CD4-positive, alpha-beta T cell (primary cell): ENCODE measurements at regions of chr7 and their contacts with region 1.

Region 1: DNA sequence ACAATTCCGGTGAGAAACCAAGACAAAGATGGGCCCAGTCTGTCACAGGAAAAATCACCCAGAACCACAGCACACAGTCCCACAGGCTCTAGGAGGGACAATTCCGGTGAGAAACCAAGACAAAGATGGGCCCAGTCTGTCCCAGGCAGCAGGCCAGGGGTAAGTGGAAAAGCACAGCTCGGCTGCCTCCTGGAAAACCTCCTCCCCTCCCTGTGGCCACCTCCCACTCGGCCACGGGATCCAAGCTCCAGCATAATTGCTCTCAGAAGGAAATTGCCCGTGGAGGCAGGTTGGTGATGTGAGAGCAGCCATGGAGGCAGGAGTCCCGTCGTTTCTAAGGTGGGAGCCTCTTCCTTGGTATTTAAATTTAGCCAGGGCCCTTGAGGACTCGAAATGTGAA is 95.7 kb downstream of the PLXNA4 start:
- DNase-seq: no peak
- ATAC-seq: no peak
- H3K4me3 ChIP-seq: no peak overlapping the region
- H3K4me3 Mint-ChIP-seq: no peak overlapping the region
- H3K27ac ChIP-seq: no peak overlapping the region
- H3K27ac Mint-ChIP-seq: no peak overlapping the region
- H3K4me1 ChIP-seq: peaks cover 8% of the 10 kb centered on the region
- H3K4me1 Mint-ChIP-seq: peaks cover 19% of the 10 kb centered on the region
- H3K27me3 ChIP-seq: peaks cover 0 to 3% of the 10 kb centered on the region in 2 experiments
- H3K27me3 Mint-ChIP-seq: peaks cover 4% of the 10 kb centered on the region
- CTCF ChIP-seq: no peak

Region 2: DNA sequence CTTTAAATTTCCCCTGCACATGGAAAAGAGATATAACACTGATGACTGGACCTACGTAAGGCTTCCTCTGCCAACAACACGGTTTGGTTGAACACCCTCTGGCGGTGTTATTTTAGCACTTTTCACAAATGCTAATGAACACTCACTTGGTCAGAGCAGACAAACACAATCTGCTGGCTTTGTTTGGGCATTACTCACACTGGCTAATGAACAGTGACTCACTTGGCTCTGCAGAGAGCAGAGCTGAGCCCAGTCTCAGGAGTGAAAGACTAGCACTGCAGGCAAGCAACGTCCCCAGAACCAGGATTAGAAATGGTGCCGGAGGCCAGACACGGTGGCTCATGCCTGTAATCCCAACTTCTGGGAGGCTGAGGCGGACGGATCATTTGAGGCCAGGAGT is 335.1 kb before region 1 on chr7:
- CTCF ChIA-PET with region 1: no interaction called
- POLR2A ChIA-PET with region 1: no interaction called
- intact Hi-C with region 1: no loop called
- DNase-seq: no peak
- ATAC-seq: no peak
- H3K4me3 ChIP-seq: no peak overlapping the region
- H3K4me3 Mint-ChIP-seq: no peak overlapping the region
- H3K27ac ChIP-seq: no peak overlapping the region
- H3K27ac Mint-ChIP-seq: no peak overlapping the region
- H3K4me1 ChIP-seq: no peaks in the 10 kb centered on the region
- H3K4me1 Mint-ChIP-seq: no peaks in the 10 kb centered on the region
- H3K27me3 ChIP-seq: no peaks in the 10 kb centered on the region
- H3K27me3 Mint-ChIP-seq: no peaks in the 10 kb centered on the region
- CTCF ChIP-seq: no peak

Region 3: GRCh38 chr7:132424821-132425724 is 55.5 kb before region 1 on chr7:
- CTCF ChIA-PET with region 1: no interaction called
- POLR2A ChIA-PET with region 1: no interaction called
- intact Hi-C with region 1: loop called (anchors 5 kb)
- DNase-seq: no peak
- ATAC-seq: no peak
- H3K4me3 ChIP-seq: no peak overlapping the region
- H3K4me3 Mint-ChIP-seq: no peak overlapping the region
- H3K27ac ChIP-seq: no peak overlapping the region
- H3K27ac Mint-ChIP-seq: no peak overlapping the region
- H3K4me1 ChIP-seq: peaks cover 12% of the 10 kb centered on the region
- H3K4me1 Mint-ChIP-seq: peaks cover 21% of the 10 kb centered on the region
- H3K27me3 ChIP-seq: no peaks in the 10 kb centered on the region
- H3K27me3 Mint-ChIP-seq: no peaks in the 10 kb centered on the region
- CTCF ChIP-seq: no peak